PC-9 (cell line): ENCODE measurements at regions of chr6 and their contacts with region 1.

Region 1: DNA sequence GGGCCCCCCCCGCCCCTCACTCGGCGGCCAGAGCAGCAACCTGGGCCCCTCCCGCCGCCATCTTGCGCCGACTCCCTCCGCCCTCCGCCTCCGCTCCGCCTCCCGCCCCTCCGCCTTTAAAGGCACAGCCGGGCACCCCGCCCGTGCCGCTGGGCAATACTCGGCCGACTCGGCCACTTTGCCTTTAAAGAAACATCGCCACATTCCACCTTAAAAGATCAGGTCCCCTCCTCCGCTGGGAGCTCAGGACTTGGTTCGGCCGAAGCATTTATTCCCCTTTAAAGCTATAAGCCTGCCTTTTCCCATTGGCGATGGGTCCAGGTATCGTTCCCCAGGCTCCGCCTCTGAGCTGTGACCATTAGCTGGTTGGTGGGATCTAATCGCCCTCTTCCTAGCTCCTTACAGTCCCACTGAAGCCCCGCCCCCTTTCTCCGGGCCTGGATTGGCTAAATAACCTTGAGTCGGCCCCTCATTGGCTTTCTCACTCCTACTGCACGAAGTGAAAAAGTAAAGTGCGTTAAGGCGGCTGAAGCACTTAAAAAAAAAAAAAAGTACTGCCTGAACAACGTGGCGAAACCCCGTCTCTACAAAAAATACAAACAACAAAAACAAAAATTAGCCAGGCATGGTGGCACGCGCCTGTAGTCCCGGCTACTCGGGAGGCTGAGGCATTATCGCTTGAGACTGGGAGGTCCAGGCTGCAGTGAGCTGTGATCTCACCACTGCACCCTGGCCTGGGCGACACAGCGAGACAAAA is at the start of gene ZBTB22:
- DNase-seq: peak; percentile 97 to 98
- H3K4me3 ChIP-seq: peak within 1 kb of the TSS; percentile 49
- H3K27ac ChIP-seq: peak within 1 kb of the TSS; percentile 66
- H3K4me1 ChIP-seq: peaks cover 51% of the 10 kb centered on the region
- H3K27me3 ChIP-seq: no peaks in the 10 kb centered on the region
- CTCF ChIP-seq: no peak
- total RNA-seq, gene ZBTB22: 16.5 and 20.8 TPM in 2 replicates

Region 2: GRCh38 chr6:33299237-33299944 is 18.5 kb before region 1 on chr6:
- CTCF ChIA-PET with region 1: interaction called, 7 read pairs
- POLR2A ChIA-PET with region 1: interaction called, 25 read pairs
- intact Hi-C with region 1: loop called (anchors 2 kb)
- DNase-seq: peak; percentile 72 to 87
- H3K4me3 ChIP-seq: peak overlapping the region; percentile 75
- H3K27ac ChIP-seq: peak overlapping the region; percentile 88
- H3K4me1 ChIP-seq: peaks cover 23% of the 10 kb centered on the region
- H3K27me3 ChIP-seq: no peaks in the 10 kb centered on the region
- CTCF ChIP-seq: peak; percentile 78

Region 3: GRCh38 chr6:33579828-33580714 is 262.2 kb after region 1 on chr6 and contains the start of gene BAK1:
- CTCF ChIA-PET with region 1: no interaction called
- POLR2A ChIA-PET with region 1: interaction called, 3 read pairs
- intact Hi-C with region 1: loop called (anchors 10 kb)
- DNase-seq: peak; percentile 84 to 87
- H3K4me3 ChIP-seq: peak within 1 kb of the TSS; percentile 98
- H3K27ac ChIP-seq: no peak within 1 kb of the TSS
- H3K4me1 ChIP-seq: peaks cover 15% of the 10 kb centered on the region
- H3K27me3 ChIP-seq: no peaks in the 10 kb centered on the region
- CTCF ChIP-seq: peak; percentile 59
- total RNA-seq, gene BAK1: 24.6 and 28.4 TPM in 2 replicates

Region 4: GRCh38 chr6:34145161-34146020 is 827.5 kb after region 1 on chr6:
- CTCF ChIA-PET with region 1: no interaction called
- POLR2A ChIA-PET with region 1: interaction called, 11 read pairs
- intact Hi-C with region 1: no loop called
- DNase-seq: peak in 1 of 2 experiments; percentile 33
- H3K4me3 ChIP-seq: peak overlapping the region; percentile 61
- H3K27ac ChIP-seq: no peak overlapping the region
- H3K4me1 ChIP-seq: no peaks in the 10 kb centered on the region
- H3K27me3 ChIP-seq: peaks cover 71% of the 10 kb centered on the region
- CTCF ChIP-seq: no peak